Cardiac septum (tissue), 1 donor: ENCODE measurements at regions of chr6 and their contacts with region 1.

Region 1: GRCh38 chr6:53410508-53411258 is 61.9 kb upstream of the ELOVL5 start:
- DNase-seq: no peak

Region 2: DNA sequence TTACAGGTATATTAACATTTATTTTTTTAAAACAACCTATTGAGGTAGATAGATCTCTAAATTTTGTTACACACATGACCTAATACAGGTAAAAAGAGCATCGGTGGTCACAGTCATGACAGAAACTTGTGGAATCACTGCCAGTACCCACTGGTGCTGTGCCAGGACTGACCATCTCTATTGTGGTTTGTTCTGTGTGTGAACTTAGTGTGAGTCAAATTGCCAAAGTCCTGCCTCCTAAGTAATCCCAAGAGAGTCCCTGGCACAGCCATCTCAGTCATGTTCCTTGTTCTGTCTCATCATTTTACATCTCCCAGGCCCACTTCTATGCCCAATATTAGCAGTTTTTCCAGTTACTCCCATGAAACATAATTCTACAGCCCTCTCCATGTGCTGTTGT is 668.8 kb before region 1 on chr6:
- intact Hi-C with region 1: no loop called
- DNase-seq: no peak

Region 3: DNA sequence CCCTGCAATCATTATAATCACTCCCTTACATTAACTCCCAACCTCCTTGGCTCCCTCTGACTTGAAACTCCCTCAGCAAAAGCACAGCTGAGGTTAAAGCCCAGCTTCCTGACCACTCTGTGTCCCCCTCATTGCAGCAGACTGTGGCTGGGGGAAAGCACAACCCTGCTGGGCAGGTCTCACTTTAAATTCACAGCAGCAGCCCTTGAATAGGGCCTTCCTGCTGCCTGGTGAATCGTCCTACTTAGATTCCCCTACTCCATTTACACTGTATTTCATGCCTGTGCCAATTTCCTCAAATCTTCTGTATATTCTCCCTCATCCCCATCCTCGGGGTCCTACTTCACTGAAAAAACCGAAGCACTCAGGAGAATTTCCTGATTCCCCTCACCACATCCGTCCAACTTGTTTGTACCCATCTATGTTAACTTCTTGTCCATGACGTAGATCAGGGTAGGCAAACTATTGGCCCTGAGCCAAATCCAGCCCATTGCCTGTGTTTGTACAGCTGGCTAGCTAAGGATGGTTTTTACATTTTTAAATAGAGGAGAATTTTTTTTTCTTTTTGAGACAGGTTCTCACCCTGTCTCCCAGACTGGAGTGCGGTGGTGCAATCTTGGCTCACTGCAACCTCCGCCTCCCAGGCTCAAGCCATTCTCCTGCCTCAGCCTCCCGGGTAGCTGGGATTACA is 230.6 kb before region 1 on chr6:
- intact Hi-C with region 1: loop called (anchors 2 kb)
- DNase-seq: no peak

Region 4: DNA sequence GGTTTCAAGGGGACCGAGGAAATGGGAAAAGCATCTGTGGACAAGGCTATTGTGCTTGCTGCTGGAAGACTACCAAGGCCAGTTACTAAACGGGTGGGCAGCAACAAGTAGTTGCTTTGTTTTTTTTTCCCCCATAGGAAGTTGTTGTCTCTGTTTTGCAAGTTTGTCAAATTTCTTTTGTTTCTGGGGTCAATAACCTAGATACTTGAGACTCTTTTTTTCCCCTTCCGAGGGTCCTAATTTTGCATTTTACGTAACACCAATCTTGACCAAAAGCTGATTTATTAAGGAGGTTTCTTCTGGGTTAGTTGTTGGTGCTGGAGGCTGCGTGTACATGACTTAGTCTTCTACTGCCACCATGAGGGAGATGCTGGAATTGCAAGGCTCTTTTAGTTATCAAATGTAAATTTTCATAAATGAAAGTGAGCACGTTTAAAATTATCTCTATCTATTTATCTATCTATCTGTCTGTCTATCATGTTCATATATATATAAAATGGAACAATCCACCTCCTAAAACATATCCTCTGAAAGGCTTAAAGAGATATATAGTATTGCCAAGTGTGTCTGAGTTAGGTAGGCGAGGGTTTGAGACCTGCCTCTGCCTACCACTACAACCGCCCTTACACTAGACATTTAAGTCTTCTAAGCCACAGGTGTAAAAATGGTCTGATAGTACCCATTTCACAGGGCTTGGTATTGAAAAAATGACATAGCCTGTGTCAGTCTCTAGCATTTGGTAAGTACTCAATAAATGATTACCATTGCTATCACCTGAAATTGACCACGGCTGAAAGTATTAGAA is 74.0 kb after region 1 on chr6:
- intact Hi-C with region 1: loop called (anchors 1 kb)
- DNase-seq: no peak